ENCODE measurements at regions of chrX and their contacts with region 1.

Region 1: DNA sequence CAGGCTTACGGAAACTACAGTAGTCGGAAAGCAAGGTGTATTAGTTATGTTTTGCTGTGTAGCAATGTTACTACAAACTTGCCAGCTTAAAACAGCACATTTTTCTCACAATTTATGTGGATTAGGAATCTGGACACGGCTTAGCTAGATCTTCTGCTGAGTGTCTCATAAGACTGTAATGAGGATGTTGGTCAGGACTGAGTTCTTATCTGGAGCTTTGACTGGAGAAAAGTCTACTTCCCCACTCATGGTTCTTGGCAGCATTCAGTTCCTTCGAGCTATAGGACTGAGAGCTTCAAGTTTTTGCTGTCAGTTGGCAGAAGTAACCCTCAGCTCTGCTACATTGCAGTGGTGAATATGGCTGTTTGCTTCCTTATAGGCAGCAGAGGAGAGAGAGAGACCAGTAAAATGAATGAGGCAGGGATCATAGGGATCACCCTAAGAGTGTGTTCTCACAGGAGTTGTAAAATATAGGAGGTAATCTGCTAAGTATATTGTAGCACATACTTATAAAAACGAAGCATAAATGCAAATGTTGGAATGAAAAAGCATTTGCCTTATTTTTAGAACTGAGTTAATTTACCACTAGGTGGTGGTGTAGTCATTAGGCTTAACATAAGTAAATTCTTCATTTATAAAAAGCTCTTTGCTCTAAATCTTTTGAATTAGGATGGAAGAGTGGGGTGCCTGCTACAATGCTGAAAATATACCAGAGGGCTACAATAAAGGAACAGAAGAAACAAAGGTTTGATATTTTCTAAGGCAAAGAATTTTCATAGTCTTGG is 38.6 kb downstream of the ALG13 start:
- DNase-seq: no peak
- ATAC-seq: no peak
- H3K4me3 ChIP-seq: no peak overlapping the region
- H3K4me3 Mint-ChIP-seq: no peak overlapping the region
- H3K27ac ChIP-seq: no peak overlapping the region
- H3K27ac Mint-ChIP-seq: no peak overlapping the region
- H3K4me1 ChIP-seq: no peaks in the 10 kb centered on the region
- H3K4me1 Mint-ChIP-seq: no peaks in the 10 kb centered on the region
- H3K27me3 ChIP-seq: no peaks in the 10 kb centered on the region
- H3K27me3 Mint-ChIP-seq: no peaks in the 10 kb centered on the region
- CTCF ChIP-seq: peak; percentile 13

Region 2: DNA sequence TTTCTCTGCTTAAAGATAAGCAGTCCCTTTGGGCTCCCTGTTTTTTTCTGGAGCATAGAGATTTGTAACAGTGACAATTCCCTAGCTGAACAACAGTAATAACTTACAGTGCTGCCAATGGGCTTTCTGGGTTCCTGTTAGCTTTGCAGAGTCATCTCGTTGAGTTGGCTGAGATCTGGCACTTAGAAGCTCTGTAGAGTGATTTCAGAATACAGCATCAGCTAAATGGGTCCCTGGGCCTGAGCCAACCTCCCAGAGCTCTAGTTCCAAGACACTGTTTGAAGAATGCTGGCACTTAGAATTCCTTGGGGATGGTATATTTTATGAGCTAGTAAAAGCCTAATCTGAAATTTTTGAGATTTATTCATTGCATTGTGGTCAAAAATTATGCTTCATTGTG is 251.7 kb before region 1 on chrX:
- CTCF ChIA-PET with region 1: no interaction called
- POLR2A ChIA-PET with region 1: no interaction called
- intact Hi-C with region 1: no loop called
- DNase-seq: no peak
- ATAC-seq: no peak
- H3K4me3 ChIP-seq: no peak overlapping the region
- H3K4me3 Mint-ChIP-seq: no peak overlapping the region
- H3K27ac ChIP-seq: no peak overlapping the region
- H3K27ac Mint-ChIP-seq: no peak overlapping the region
- H3K4me1 ChIP-seq: no peaks in the 10 kb centered on the region
- H3K4me1 Mint-ChIP-seq: no peaks in the 10 kb centered on the region
- H3K27me3 ChIP-seq: no peaks in the 10 kb centered on the region
- H3K27me3 Mint-ChIP-seq: no peaks in the 10 kb centered on the region
- CTCF ChIP-seq: no peak

Region 3: DNA sequence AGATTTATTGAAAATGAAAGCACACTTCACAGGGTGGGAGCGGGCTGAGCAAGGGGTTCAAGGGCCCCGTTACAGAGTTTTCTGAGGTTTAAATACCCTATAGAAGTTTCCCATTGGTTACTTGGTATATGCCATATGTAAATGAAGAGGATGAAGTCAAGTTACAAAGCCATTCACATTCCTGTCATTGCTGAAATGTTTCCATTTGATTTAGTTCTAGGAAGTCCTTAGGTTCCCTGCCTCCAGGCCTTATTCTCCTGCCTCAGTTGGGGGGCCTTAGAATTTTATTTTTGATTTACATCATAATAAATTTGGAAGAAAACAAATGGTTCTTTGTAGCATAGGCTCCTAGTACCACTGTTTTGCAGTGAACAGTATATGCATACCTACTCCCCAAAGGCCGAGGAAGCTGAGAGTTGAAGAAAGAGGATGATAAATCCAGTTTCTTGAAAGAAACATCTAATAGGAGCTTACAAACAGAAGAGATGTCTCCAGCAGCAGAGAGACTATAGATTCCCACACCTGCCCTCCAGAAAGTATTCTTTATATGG is 176.3 kb before region 1 on chrX:
- CTCF ChIA-PET with region 1: no interaction called
- POLR2A ChIA-PET with region 1: no interaction called
- intact Hi-C with region 1: no loop called
- DNase-seq: no peak
- ATAC-seq: no peak
- H3K4me3 ChIP-seq: no peak overlapping the region
- H3K4me3 Mint-ChIP-seq: no peak overlapping the region
- H3K27ac ChIP-seq: no peak overlapping the region
- H3K27ac Mint-ChIP-seq: no peak overlapping the region
- H3K4me1 ChIP-seq: no peaks in the 10 kb centered on the region
- H3K4me1 Mint-ChIP-seq: no peaks in the 10 kb centered on the region
- H3K27me3 ChIP-seq: no peaks in the 10 kb centered on the region
- H3K27me3 Mint-ChIP-seq: no peaks in the 10 kb centered on the region
- CTCF ChIP-seq: no peak

Region 4: DNA sequence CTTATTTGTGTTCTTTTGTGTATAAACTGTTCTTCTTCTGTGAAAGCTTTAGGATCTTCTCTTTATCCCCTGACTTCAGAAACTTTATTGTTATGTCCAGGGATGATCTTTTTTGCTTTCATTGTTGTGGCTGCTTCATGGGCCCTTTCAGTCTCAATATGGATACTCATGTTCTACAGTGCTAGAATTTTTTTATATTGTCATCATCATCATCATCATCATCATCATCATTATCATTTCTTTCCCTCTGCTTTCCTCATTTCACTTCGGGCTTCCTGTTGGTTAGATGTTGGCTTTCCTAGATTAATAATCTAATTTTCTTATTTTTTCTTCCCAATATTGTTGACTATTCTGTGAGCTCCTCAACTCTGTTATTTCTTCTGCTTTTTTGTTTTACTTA is 16.6 kb before region 1 on chrX:
- CTCF ChIA-PET with region 1: no interaction called
- POLR2A ChIA-PET with region 1: no interaction called
- intact Hi-C with region 1: loop called in 1 of 2 experiments (anchors 2 kb)
- DNase-seq: no peak
- ATAC-seq: no peak
- H3K4me3 ChIP-seq: no peak overlapping the region
- H3K4me3 Mint-ChIP-seq: no peak overlapping the region
- H3K27ac ChIP-seq: no peak overlapping the region
- H3K27ac Mint-ChIP-seq: no peak overlapping the region
- H3K4me1 ChIP-seq: no peaks in the 10 kb centered on the region
- H3K4me1 Mint-ChIP-seq: peaks cover 27% of the 10 kb centered on the region
- H3K27me3 ChIP-seq: no peaks in the 10 kb centered on the region
- H3K27me3 Mint-ChIP-seq: no peaks in the 10 kb centered on the region
- CTCF ChIP-seq: no peak

Measured in CD4-positive, alpha-beta T cell (primary cell).